Activated CD4-positive, alpha-beta memory T cell treated with anti-CD3 and anti-CD28 coated beads for 36 hours (primary cell): ENCODE measurements at regions of chr17 and their contacts with region 1.

Region 1: DNA sequence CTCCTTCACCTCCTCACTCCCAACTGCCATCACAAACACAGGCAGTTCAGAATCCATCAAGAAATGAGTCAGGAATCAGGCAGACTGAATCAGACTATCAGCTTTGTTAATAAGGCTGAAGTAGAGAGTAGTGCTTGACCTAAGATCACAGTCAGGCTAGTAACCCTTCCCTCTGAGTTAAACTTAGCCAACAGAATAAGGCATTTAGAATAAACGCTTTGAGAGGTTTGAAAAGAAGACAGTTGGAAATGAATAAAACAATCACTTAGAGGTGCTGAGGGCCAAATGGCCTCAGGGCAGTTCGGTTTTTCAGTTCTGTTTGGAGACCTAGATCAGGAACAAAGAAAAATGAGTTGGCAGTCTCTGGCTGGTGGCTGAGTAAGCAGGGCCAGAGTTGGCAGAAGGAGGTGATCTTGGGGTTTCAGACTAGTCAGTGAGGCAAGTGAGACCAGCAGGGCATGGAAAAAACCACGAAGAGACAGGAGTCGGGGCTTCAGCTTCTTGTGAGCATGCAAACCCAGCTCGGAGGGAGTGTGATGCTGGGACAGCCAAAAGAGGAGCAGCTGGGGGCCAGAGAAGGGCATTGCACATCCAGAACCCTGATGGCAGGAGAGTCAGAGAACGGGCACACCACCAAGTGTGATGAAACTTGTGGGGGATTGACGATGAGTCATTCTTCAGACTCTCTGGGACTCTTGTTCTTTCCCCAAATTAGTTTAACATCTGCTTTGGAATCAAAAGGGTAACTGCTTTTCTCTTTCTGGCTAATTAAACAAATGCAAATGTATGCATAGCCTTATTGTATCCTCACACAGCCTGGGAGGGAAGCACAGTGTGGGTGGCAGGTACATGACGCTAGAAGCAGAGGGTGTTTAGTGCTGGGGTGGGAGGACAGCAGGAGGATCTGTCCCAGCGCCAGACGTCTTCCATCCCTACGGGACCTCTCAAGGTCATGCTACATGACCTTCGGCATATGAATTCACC is 54.8 kb downstream of the SPECC1 start:
- DNase-seq: peak; percentile 69
- H3K4me3 Mint-ChIP-seq: peak overlapping the region; percentile 40
- H3K27ac Mint-ChIP-seq: peak overlapping the region; percentile 74
- H3K4me1 Mint-ChIP-seq: peaks cover 26% of the 10 kb centered on the region
- H3K27me3 Mint-ChIP-seq: no peaks in the 10 kb centered on the region

Region 2: GRCh38 chr17:20032636-20033035 is 31.3 kb before region 1 on chr17:
- CTCF ChIA-PET with region 1: no interaction called
- POLR2A ChIA-PET with region 1: no interaction called
- intact Hi-C with region 1: loop called (anchors 2 kb)
- DNase-seq: no peak
- H3K4me3 Mint-ChIP-seq: no peak overlapping the region
- H3K27ac Mint-ChIP-seq: no peak overlapping the region
- H3K4me1 Mint-ChIP-seq: peaks cover 6% of the 10 kb centered on the region
- H3K27me3 Mint-ChIP-seq: no peaks in the 10 kb centered on the region

Region 3: DNA sequence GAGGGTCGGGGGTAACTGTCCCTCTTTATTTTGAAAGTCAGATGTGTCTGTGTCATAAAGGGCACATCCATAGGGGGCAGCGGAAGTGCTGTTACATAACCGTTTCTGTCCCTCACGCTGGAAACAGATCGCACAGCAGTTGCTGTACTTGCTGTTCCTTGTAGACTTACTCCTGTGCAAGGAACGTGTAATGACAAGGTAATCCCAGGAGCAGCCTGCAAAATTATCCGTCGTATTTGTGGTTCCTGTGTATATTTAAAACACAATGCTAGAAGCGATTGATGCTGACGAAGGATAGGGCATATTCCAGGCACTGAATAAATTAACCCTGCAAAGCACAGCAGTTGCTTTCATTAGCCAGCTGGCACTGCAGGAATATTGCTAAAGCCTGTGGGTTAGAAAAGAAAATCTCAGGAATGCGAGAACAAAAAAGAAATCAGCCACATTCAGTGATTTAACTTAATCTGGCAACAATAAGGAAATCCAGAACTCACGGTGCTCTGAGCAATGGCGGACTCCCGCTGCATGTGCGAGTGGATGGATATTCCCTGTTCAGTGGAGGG is 21.4 kb after region 1 on chr17:
- CTCF ChIA-PET with region 1: no interaction called
- POLR2A ChIA-PET with region 1: no interaction called
- intact Hi-C with region 1: no loop called
- DNase-seq: no peak
- H3K4me3 Mint-ChIP-seq: no peak overlapping the region
- H3K27ac Mint-ChIP-seq: no peak overlapping the region
- H3K4me1 Mint-ChIP-seq: peaks cover 9% of the 10 kb centered on the region
- H3K27me3 Mint-ChIP-seq: no peaks in the 10 kb centered on the region